ENCODE measurements at regions of chr2 and their contacts with region 1.

Region 1: DNA sequence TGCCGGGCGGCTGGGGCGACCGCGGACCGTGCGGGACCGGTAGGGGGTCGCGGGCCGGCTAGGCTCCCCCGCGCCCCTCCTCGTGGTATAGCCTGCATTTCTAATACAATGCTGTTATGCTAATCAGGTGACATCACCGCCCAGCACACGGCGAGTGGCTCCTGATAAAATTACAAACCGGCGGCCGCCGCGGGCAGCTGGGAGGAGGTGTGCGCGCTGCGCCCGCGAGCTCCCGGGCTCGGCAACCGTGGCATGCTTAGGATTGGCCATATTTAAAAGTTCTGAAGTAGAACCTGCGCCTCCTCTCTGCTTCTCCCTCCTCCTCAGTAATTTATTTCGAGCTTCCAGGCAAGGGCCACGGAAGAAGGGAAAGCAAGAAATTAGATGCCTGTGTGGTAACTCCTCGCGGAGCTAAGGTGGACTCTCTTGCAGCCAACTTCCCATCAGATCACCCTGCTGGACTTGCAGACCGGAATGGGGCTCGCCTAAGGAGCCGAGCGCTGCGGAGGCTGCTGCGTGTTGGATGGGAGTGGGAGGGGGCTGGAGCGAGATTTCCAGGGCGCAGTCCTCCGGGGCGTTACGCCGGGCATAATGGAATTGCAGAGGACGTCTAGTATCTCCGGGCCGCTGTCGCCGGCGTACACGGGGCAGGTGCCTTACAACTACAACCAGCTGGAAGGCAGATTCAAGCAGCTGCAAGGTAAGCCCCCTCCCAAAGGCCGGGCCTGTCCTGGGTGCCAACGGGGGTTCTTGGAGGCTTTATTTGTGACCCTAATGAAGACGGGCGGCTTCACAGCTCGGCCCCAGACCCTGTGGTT is 102.3 kb downstream of the SPTBN1 start:
- DNase-seq: peak; percentile 60
- ATAC-seq: peak; percentile 60
- H3K4me3 Mint-ChIP-seq: peak overlapping the region; percentile 89
- H3K27ac Mint-ChIP-seq: peak overlapping the region; percentile 94
- H3K4me1 Mint-ChIP-seq: peaks cover 50% of the 10 kb centered on the region
- H3K27me3 Mint-ChIP-seq: no peaks in the 10 kb centered on the region
- CTCF ChIP-seq: no peak

Region 2: DNA sequence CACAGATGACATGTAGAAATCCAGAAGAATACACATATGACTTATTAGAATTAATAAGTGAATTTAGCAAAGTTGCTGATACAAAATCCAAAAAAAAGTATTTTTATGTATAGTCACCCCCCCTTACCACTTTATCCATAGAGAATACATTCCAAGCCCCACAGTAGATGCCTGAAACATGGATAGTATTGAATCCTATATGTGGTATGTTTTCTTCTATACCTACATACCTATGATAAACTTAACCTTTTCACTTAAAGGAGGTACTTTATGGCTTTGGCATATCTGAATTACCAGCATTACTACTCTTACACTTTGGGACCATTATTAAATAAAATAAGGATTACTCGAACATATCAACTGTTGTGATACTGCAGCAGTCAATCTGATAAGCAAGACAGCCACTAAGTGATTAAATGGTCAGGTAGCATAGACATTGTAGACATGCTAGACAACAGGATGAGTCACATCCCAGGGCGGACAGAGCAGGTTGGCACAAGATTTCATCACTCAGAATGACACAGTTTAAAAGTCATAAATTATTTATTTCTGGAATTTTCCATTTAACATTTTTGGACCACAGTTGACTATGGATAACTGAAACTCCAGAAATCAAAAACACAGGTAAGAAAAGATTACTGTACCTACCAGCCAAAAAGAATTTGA is 999.0 kb before region 1 on chr2:
- CTCF ChIA-PET with region 1: no interaction called
- POLR2A ChIA-PET with region 1: no interaction called
- intact Hi-C with region 1: no loop called
- DNase-seq: no peak
- ATAC-seq: no peak
- H3K4me3 Mint-ChIP-seq: no peak overlapping the region
- H3K27ac Mint-ChIP-seq: no peak overlapping the region
- H3K4me1 Mint-ChIP-seq: no peaks in the 10 kb centered on the region
- H3K27me3 Mint-ChIP-seq: no peaks in the 10 kb centered on the region
- CTCF ChIP-seq: no peak

Region 3: GRCh38 chr2:54149638-54150441 is 408.6 kb before region 1 on chr2:
- CTCF ChIA-PET with region 1: no interaction called
- POLR2A ChIA-PET with region 1: no interaction called
- intact Hi-C with region 1: no loop called
- DNase-seq: no peak
- ATAC-seq: no peak
- H3K4me3 Mint-ChIP-seq: no peak overlapping the region
- H3K27ac Mint-ChIP-seq: no peak overlapping the region
- H3K4me1 Mint-ChIP-seq: no peaks in the 10 kb centered on the region
- H3K27me3 Mint-ChIP-seq: no peaks in the 10 kb centered on the region
- CTCF ChIP-seq: no peak

Region 4: DNA sequence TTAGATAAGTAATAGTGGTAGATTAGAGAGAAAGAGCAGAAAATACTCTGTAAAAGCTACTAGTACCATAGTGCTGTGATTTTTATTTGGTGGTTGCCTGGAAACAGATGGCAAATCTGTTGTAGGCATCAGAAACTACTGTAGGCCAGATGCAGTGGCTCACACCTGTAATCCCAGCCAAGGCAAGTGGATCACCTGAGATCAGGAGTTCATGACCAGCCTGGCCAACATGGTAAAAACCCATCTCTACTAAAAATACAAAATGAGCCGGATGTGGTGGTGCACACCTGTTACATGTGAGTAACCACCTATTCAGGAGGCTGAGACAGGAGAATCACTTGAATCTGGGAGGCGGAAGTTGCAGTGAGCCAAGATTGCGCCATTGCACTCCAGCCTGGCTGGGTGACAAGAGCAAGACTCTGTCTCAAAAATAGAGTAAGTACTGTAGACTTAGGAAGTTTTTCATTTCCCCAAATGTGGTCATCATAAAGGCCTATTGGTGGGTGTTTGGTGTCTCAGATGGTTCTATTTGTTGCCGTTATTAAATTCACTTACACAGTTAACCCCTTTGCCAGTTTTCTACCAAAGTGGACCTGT is 22.7 kb before region 1 on chr2:
- CTCF ChIA-PET with region 1: interaction called, 3 read pairs
- POLR2A ChIA-PET with region 1: no interaction called
- intact Hi-C with region 1: loop called (anchors 2 kb)
- DNase-seq: no peak
- ATAC-seq: peak; percentile 40
- H3K4me3 Mint-ChIP-seq: no peak overlapping the region
- H3K27ac Mint-ChIP-seq: no peak overlapping the region
- H3K4me1 Mint-ChIP-seq: peaks cover 20% of the 10 kb centered on the region
- H3K27me3 Mint-ChIP-seq: no peaks in the 10 kb centered on the region
- CTCF ChIP-seq: no peak

Region 5: GRCh38 chr2:54579684-54580620 is 21.6 kb after region 1 on chr2:
- CTCF ChIA-PET with region 1: interaction called, 21 read pairs
- POLR2A ChIA-PET with region 1: interaction called, 198 read pairs
- intact Hi-C with region 1: no loop called
- DNase-seq: no peak
- ATAC-seq: peak; percentile 66
- H3K4me3 Mint-ChIP-seq: peak overlapping the region; percentile 77
- H3K27ac Mint-ChIP-seq: peak overlapping the region; percentile 95
- H3K4me1 Mint-ChIP-seq: peaks cover 98% of the 10 kb centered on the region
- H3K27me3 Mint-ChIP-seq: no peaks in the 10 kb centered on the region
- CTCF ChIP-seq: no peak

Region 6: GRCh38 chr2:54597153-54597848 is 38.9 kb after region 1 on chr2:
- CTCF ChIA-PET with region 1: interaction called, 6 read pairs
- POLR2A ChIA-PET with region 1: interaction called, 36 read pairs
- intact Hi-C with region 1: loop called (anchors 1 kb)
- DNase-seq: no peak
- ATAC-seq: no peak
- H3K4me3 Mint-ChIP-seq: peak overlapping the region; percentile 60
- H3K27ac Mint-ChIP-seq: peak overlapping the region; percentile 92
- H3K4me1 Mint-ChIP-seq: peaks cover 91% of the 10 kb centered on the region
- H3K27me3 Mint-ChIP-seq: no peaks in the 10 kb centered on the region
- CTCF ChIP-seq: no peak

Region 7: DNA sequence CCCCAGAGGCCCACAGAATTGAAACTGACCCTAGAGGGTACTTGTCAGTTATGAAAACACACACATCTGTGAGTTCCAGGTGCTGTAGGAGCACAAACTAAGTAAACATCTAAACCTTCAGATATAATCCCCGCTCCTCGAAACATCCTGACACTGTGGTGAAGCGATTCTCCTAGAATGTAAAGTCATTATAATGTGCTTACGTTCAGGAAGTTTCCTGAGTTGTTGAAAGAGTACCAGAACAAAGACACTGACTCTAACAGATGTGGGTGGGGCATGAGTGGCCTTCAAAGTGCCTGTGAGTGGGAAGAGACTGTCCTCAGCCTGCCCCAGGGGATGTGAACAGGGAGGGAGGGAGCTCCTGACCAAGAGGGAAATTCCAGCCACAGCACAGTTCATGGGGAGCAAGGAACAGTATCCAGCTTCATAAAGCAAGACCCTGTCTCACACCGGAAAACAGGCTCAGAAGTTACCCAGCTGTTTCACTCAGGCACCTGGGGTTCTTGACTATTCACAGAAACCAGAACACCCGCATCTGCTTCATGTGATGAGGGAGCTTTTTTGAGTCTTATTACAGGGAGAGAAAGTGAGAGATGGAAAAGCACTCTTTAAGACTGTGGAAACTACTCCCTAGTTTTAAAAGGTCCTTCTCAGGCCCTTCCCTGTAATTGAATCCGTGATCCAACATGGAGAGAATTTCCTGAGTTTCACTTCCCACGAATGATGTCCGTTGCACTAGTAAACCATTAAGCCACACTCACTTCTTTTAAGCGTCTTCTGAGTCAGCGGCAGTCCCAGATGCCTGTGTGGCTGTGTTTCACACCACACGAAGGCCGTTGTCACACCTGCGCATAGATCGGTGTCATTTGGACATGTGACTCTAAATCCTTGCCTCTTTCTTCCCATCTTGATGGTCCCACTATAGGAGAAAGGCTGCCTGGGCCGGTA is 76.4 kb after region 1 on chr2:
- CTCF ChIA-PET with region 1: interaction called, 13 read pairs
- POLR2A ChIA-PET with region 1: interaction called, 31 read pairs
- intact Hi-C with region 1: loop called (anchors 1 kb)
- DNase-seq: peak; percentile 42
- ATAC-seq: peak; percentile 73
- H3K4me3 Mint-ChIP-seq: peak overlapping the region; percentile 47
- H3K27ac Mint-ChIP-seq: peak overlapping the region; percentile 97
- H3K4me1 Mint-ChIP-seq: peaks cover 59% of the 10 kb centered on the region
- H3K27me3 Mint-ChIP-seq: no peaks in the 10 kb centered on the region
- CTCF ChIP-seq: no peak

Region 8: DNA sequence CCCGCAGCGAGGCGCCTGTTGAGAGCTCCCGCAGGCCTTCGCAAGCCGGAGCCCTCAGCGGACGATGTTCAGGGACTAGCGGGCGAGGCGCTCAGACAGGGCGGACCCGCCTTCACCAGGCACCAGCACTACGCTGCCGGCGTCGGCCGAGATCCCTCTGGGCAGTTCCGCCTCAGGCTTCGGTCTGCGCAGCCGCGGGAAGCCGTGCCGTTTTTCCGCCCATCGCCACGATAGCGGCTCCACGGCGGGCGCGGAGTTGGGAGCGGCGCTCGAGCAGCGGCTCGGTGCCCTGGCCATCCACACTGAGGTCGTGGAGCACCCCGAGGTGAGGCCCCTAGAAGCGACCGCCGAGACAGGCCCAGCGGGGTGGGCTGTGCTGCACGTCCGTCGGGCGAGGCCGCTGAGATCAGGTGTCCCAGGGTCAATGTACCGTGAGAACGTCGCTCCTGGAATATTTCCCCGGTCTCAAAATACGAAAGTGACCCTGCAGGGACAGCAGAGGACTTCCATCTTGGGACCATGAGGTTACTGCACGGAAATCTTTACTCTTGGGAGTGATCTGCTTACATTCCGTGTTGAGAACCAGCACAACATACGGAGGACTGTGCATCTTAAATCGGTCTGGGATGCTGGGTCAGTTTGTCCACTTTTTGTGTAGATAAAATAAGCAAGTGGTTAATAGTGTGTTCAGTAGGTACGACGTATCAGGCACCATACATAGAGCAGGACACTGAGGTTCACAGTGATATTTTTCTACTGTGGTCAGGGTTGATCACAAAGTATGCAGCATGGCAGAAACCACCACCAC is 723.9 kb after region 1 on chr2:
- CTCF ChIA-PET with region 1: no interaction called
- POLR2A ChIA-PET with region 1: no interaction called
- intact Hi-C with region 1: loop called (anchors 5 kb)
- DNase-seq: peak; percentile 83
- ATAC-seq: peak; percentile 99
- H3K4me3 Mint-ChIP-seq: peak overlapping the region; percentile 88
- H3K27ac Mint-ChIP-seq: peak overlapping the region; percentile 93
- H3K4me1 Mint-ChIP-seq: peaks cover 28% of the 10 kb centered on the region
- H3K27me3 Mint-ChIP-seq: no peaks in the 10 kb centered on the region
- CTCF ChIP-seq: no peak